ENCODE measurements at regions of chr12 and their contacts with region 1.

Region 1: DNA sequence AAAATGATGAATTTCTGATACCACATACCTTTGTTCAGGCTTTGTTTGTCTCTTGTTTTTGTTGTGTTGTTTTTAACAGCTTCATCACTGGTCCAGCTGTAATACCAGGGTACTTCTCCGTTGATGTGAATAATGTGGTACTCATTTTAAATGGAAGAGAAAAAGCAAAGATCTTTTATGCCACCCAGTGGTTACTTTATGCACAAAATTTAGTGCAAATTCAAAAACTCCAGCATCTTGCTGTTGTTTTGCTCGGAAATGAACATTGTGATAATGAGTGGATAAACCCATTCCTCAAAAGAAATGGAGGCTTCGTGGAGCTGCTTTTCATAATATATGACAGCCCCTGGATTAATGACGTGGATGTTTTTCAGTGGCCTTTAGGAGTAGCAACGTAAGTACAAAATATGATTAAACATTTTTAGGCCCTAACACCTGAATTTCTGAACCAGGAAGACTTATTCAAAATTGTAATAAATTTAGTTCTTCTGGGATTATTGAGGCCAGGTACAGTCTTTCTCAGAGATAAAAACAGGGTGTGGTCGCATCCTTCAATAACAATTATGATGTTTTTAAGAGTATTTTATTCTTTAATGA is 22.4 kb downstream of the RXYLT1 start:
- DNase-seq: peak; percentile 49
- H3K4me3 ChIP-seq: no peak overlapping the region
- H3K27ac ChIP-seq: no peak overlapping the region
- H3K4me1 ChIP-seq: no peaks in the 10 kb centered on the region
- H3K27me3 ChIP-seq: no peaks in the 10 kb centered on the region
- CTCF ChIP-seq: peak; percentile 72
- EP300 ChIP-seq: no peak
- RAD21 ChIP-seq: peak; percentile 85

Region 2: GRCh38 chr12:63420206-63420644 is 381.9 kb before region 1 on chr12:
- CTCF ChIA-PET with region 1: interaction called, 39 read pairs
- POLR2A ChIA-PET with region 1: no interaction called
- DNase-seq: peak; percentile 37
- H3K4me3 ChIP-seq: no peak overlapping the region; a peak in 1 of 4 replicates
- H3K27ac ChIP-seq: no peak overlapping the region
- H3K4me1 ChIP-seq: no peaks in the 10 kb centered on the region
- H3K27me3 ChIP-seq: no peaks in the 10 kb centered on the region; the same call in 1 of the 2 replicates
- CTCF ChIP-seq: peak; percentile 76
- EP300 ChIP-seq: no peak
- RAD21 ChIP-seq: peak; percentile 70

Region 3: DNA sequence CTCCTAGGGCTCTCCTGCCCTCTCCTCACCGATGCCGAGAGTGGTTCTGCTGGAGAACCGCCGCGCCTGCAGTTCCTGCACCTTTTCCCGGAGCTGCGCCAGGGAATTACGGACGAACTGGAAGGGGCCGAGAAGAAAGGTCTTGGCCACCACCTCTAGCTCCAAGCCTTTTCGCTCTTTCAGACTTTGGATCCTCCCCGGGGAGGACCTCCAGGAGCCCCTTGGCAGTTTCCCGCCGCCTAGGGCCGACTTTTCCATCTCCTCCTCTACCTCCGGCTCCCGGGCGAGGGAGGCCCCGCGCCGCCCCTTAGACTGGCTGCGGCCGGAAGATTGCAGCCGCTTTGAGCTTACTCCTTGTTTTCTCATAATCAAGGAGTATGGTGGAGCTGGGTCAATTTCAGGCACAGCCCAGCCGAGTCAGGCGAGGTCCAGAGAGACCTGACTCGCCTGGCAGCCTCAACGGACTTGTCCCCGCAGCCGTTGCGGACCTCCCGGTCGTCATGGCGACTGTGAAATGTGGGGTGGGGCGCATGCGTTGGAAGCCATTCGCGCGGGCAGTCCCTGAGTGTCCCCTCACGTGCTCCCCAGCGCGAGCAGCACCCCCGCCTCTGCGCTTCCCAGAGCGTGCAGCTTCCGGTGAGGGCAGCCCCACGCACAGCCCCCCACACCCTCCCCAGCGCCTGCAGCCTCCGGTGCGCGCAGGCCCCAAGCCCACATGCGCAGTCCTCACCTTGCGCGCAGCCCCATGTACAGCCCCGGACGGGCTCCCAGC is 133.9 kb before region 1 on chr12 and contains the start of gene DPY19L2:
- CTCF ChIA-PET with region 1: interaction called, 11 read pairs
- POLR2A ChIA-PET with region 1: no interaction called
- DNase-seq: peak; percentile 83
- H3K4me3 ChIP-seq: peak within 1 kb of the TSS; percentile 88 to 93
- H3K27ac ChIP-seq: peak within 1 kb of the TSS; percentile 65 to 83
- H3K4me1 ChIP-seq: peaks cover 0 to 2% of the 10 kb centered on the region in 2 experiments; a peak in 1 of 4 replicates
- H3K27me3 ChIP-seq: no peaks in the 10 kb centered on the region
- CTCF ChIP-seq: no peak
- EP300 ChIP-seq: no peak
- RAD21 ChIP-seq: no peak
- polyA plus RNA-seq, gene DPY19L2: 4.8 and 8.8 TPM in 2 replicates

Region 4: GRCh38 chr12:63766498-63766897 is 35.6 kb before region 1 on chr12:
- CTCF ChIA-PET with region 1: interaction called, 10 read pairs
- POLR2A ChIA-PET with region 1: no interaction called
- DNase-seq: no peak
- H3K4me3 ChIP-seq: no peak overlapping the region
- H3K27ac ChIP-seq: no peak overlapping the region
- H3K4me1 ChIP-seq: no peaks in the 10 kb centered on the region
- H3K27me3 ChIP-seq: no peaks in the 10 kb centered on the region; the same call in 1 of the 2 replicates
- CTCF ChIP-seq: peak; percentile 53
- EP300 ChIP-seq: no peak
- RAD21 ChIP-seq: peak; percentile 59

Region 5: DNA sequence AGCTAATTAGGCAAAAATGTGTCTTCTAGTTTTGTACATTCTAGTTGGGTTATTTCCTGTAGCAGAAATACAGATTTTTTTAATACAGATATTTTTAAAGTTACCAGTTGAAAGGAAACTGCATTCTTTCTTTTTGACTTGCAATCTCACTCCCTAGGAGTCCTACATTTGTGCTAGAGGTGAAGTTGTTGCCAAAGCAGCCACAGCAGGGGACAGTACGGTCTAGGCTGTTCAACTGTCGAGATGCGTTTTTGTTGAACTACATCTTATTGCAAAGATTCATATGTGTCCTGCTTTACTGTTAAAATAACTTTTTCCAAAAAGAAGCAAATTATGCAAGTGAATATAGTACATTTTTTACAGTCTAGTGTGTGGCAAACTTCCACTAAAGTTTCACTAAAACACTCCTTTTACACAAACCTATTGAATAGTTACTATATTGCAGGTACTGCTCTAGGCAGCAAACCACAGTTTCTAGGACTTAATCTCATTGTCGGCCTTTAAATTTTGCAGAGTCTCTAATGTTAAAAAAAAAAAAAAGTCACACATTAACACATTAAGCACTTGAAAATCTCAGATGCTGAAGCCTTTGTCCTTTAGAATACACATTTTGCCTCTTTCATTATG is 12.1 kb after region 1 on chr12:
- CTCF ChIA-PET with region 1: interaction called, 22 read pairs
- POLR2A ChIA-PET with region 1: no interaction called
- DNase-seq: no peak
- H3K4me3 ChIP-seq: no peak overlapping the region
- H3K27ac ChIP-seq: no peak overlapping the region
- H3K4me1 ChIP-seq: no peaks in the 10 kb centered on the region
- H3K27me3 ChIP-seq: no peaks in the 10 kb centered on the region; the same call in 1 of the 2 replicates
- CTCF ChIP-seq: no peak
- EP300 ChIP-seq: no peak
- RAD21 ChIP-seq: no peak